Mammary epithelial cell (primary cell): ENCODE measurements at regions of chr5 and their contacts with region 1.

Region 1: DNA sequence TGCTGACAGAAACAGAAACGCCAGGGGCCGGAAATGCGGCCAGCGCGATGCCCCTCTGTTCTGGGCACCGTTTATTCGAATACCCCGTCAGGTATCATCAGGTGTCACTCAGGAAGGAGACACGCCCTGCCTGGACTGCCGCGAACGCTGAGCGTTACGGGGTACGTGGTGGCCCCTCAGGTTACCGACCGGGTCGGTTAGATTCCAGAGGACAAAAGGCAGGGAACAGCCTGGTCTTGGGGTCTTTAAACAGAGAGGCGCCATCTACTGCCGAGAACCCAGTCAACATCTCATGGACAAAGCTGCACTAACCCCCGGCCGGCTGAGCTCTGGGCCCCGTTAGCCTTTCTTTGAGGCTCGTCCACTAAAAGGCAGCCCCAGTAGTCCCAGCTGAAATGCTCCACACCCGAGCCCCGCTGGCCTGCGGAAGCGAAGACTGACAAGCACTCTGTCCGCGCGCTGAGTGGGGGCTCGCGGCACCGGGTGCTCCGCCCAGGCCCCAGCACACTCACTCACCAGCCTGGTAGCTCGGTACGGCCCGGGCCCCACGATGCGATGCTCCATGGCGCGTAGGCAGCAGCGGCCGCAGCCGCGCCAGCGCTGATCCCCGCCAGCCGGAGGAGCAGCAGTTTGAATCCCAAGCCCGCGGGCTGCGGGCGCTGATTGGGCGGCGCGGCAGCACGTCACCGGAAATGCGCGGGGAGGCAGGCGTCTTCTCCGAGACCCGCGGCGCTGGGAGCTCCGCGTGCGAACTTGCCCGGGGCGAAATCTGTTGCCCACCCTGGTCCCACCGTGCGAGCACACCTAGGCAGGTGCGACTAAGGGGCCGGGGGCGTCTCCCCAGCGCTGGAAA is at the start of gene DEPDC1B:
- DNase-seq: peak; percentile 91
- H3K4me3 ChIP-seq: peak within 1 kb of the TSS; percentile 80 to 90 (median 84)
- H3K27ac ChIP-seq: peak within 1 kb of the TSS; percentile 82
- H3K4me1 ChIP-seq: peaks cover 20% of the 10 kb centered on the region
- H3K27me3 ChIP-seq: no peaks in the 10 kb centered on the region
- CTCF ChIP-seq: peak in 1 of 2 donors; percentile 22
- total RNA-seq, gene DEPDC1B: 12.3 to 17.9 TPM

Region 2: DNA sequence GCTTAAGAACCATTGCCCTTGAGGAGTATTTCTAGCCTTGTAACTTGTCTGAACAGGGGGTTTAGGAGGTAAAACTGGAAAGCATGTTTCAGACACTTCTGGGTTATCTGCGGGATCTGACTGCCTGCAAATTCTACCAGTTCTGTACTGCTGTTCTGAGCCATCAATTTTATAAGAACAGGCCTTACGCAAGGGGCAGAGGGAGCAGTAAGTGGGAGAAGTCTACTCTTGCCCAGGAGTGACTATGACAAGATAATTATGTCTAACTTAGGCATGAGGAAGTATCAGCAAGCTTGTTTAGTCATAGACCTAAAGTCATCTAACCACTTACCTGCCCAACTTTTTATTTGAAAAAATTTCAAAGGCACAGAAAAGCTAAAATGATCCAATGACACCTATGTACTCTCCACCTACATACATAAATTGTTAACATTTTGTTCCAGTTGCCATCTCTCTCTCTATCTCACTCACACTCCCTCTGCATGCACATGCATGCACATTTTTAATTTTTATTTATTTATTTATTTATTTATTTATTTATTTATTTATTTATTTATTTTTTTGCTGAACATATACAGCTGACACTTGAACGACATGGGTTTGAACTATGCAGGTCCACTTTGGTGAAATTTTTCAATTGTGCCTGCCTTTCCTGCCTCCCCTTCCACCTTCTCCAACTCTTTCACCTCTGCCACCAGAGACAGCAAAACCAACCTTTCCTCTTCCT is 18.6 kb after region 1 on chr5:
- CTCF ChIA-PET with region 1: interaction called, 9 read pairs
- dilution Hi-C with region 1: no loop called
- in situ Hi-C with region 1: no loop called
- intact Hi-C with region 1: loop called (anchors 2 kb)
- DNase-seq: peak; percentile 76
- H3K4me3 ChIP-seq: no peak overlapping the region
- H3K27ac ChIP-seq: peak overlapping the region; percentile 31
- H3K4me1 ChIP-seq: peaks cover 18% of the 10 kb centered on the region
- H3K27me3 ChIP-seq: no peaks in the 10 kb centered on the region
- CTCF ChIP-seq: no peak

Region 3: GRCh38 chr5:60794691-60795090 is 94.9 kb after region 1 on chr5:
- CTCF ChIA-PET with region 1: interaction called, 21 read pairs
- dilution Hi-C with region 1: no loop called
- in situ Hi-C with region 1: no loop called
- intact Hi-C with region 1: no loop called
- DNase-seq: no peak
- H3K4me3 ChIP-seq: no peak overlapping the region
- H3K27ac ChIP-seq: no peak overlapping the region
- H3K4me1 ChIP-seq: no peaks in the 10 kb centered on the region
- H3K27me3 ChIP-seq: no peaks in the 10 kb centered on the region
- CTCF ChIP-seq: no peak

Region 4: GRCh38 chr5:60843936-60844905 is 144.5 kb after region 1 on chr5 and contains the start of gene ELOVL7:
- CTCF ChIA-PET with region 1: no interaction called
- dilution Hi-C with region 1: no loop called
- in situ Hi-C with region 1: loop called in 1 of 2 experiments (anchors 25 kb)
- intact Hi-C with region 1: loop called (anchors 1 kb)
- DNase-seq: peak; percentile 83
- H3K4me3 ChIP-seq: peak within 1 kb of the TSS; percentile 78 to 93 (median 79)
- H3K27ac ChIP-seq: peak within 1 kb of the TSS; percentile 85
- H3K4me1 ChIP-seq: peaks cover 8% of the 10 kb centered on the region
- H3K27me3 ChIP-seq: no peaks in the 10 kb centered on the region
- CTCF ChIP-seq: peak; percentile 5 to 60
- total RNA-seq, gene ELOVL7: 17.8 to 21.0 TPM

Region 5: DNA sequence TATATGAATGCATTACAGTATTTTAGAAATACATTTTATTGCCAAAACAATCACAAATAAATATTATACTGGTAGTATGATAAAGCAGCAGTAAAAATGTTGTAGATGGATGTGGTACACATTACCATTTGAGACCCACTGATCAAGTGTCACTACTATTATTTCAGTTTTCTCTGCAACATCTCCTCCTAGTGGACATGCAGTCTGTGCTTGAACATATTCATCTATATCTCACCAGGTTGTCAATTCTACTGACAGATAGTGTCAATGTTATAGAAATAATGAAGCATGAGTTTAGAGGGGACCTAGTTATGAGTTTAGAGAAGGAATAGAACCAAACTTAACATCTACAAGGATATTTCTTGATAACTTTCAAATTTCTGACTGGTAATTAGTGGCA is 183.5 kb after region 1 on chr5:
- CTCF ChIA-PET with region 1: no interaction called
- dilution Hi-C with region 1: no loop called
- in situ Hi-C with region 1: loop called in 1 of 2 experiments (anchors 25 kb)
- intact Hi-C with region 1: loop called (anchors 5 kb)
- DNase-seq: peak; percentile 5
- H3K4me3 ChIP-seq: no peak overlapping the region
- H3K27ac ChIP-seq: no peak overlapping the region
- H3K4me1 ChIP-seq: no peaks in the 10 kb centered on the region
- H3K27me3 ChIP-seq: no peaks in the 10 kb centered on the region
- CTCF ChIP-seq: peak; percentile 60 to 73

Region 6: DNA sequence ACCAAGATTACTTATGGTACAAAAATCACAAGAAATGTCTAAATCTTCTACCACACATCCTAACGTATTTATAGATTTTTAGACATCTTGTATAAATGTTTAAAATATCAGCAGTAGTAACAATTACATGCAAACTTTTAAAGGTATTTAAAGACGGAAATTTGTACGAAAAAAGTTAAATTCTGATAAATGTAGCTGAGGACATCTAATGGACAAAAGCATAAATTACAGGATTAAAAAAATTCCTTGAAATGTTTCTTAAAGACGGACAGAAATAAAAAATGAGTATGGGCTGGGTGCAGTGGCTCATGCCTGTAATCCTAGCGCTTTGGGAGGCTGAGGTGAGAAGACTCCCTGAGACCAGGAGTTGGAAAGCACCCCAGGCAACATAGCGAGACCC is 229.3 kb after region 1 on chr5:
- CTCF ChIA-PET with region 1: no interaction called
- dilution Hi-C with region 1: no loop called
- in situ Hi-C with region 1: no loop called
- intact Hi-C with region 1: loop called (anchors 1 kb)
- DNase-seq: no peak
- H3K4me3 ChIP-seq: no peak overlapping the region
- H3K27ac ChIP-seq: no peak overlapping the region
- H3K4me1 ChIP-seq: no peaks in the 10 kb centered on the region
- H3K27me3 ChIP-seq: no peaks in the 10 kb centered on the region
- CTCF ChIP-seq: peak; percentile 20 to 38